ENCODE measurements at regions of chr4 and their contacts with region 1.

Region 1: DNA sequence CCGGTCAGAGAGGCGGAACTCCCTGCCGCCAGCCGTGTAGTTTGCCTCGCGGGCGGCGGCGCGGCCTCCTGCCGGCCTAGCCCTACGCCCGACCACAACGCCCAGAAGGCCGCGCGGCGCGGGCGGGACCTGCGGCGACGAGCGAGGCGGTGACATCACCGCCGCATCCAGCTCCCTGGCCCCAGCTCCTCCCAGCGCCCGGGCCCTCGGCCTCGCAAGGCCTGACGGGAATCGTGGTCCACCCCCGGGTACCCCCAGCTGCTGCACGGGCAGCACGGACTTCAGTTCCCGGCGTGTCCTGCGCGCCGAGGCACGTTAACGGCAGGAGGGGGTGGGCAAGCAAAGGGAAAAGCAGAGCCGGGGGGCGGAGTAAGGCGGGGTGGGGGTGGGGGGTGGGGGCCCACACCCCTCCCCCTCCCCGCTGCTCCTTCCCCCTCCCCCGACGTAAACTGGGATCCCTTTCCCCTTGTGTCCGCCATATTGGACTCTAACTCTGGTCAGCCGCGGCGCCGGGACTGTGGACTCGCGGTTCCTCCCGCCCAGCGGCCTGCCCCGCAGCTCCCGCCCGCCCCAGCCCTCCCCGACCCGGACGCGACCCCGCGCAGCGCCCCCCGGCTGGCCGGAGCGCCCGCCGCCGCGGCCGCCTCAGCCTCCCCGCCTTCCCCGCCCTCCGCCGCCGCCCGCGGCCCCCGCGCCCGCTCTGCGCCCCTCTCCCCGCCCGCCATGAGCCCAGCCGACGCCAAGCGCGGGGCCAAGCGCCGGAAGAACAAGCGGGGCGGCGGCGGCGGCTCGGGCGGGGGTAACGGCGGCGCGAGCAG is at the start of gene FAM193A:
- DNase-seq: peak; percentile 99 to 100
- H3K4me3 ChIP-seq: peak within 1 kb of the TSS; percentile 85 to 99 (median 93)
- H3K27ac ChIP-seq: peak within 1 kb of the TSS; percentile 94 to 98 (median 95)
- H3K4me1 ChIP-seq: peaks cover 31 to 47% (median 39%) of the 10 kb centered on the region in 4 donors
- H3K27me3 ChIP-seq: no peaks in the 10 kb centered on the region
- CTCF ChIP-seq: no peak
- EP300 ChIP-seq: no peak
- POLR2A ChIP-seq: no peak
- total RNA-seq, gene FAM193A: 22.2 to 107 (median 37.9) TPM

Region 2: GRCh38 chr4:2458546-2459491 is 77.6 kb before region 1 on chr4:
- intact Hi-C with region 1: no loop called
- DNase-seq: no peak
- H3K4me3 ChIP-seq: no peak overlapping the region
- H3K27ac ChIP-seq: no peak overlapping the region
- H3K4me1 ChIP-seq: peaks cover 6 to 30% (median 16%) of the 10 kb centered on the region in 4 donors
- H3K27me3 ChIP-seq: peaks cover 0 to 29% (median 0%) of the 10 kb centered on the region in 3 donors
- CTCF ChIP-seq: no peak
- EP300 ChIP-seq: no peak
- POLR2A ChIP-seq: no peak

Region 3: GRCh38 chr4:2472187-2472586 is 64.2 kb before region 1 on chr4:
- intact Hi-C with region 1: loop called (anchors 10 kb)
- DNase-seq: no peak
- H3K4me3 ChIP-seq: no peak overlapping the region
- H3K27ac ChIP-seq: no peak overlapping the region
- H3K4me1 ChIP-seq: peaks cover 40 to 75% (median 51%) of the 10 kb centered on the region in 4 donors
- H3K27me3 ChIP-seq: no peaks in the 10 kb centered on the region
- CTCF ChIP-seq: no peak
- EP300 ChIP-seq: no peak
- POLR2A ChIP-seq: no peak

Measured in stomach (tissue), 19 donors.